Mammary epithelial cell (primary cell): ENCODE measurements at regions of chr14 and their contacts with region 1.

Region 1: DNA sequence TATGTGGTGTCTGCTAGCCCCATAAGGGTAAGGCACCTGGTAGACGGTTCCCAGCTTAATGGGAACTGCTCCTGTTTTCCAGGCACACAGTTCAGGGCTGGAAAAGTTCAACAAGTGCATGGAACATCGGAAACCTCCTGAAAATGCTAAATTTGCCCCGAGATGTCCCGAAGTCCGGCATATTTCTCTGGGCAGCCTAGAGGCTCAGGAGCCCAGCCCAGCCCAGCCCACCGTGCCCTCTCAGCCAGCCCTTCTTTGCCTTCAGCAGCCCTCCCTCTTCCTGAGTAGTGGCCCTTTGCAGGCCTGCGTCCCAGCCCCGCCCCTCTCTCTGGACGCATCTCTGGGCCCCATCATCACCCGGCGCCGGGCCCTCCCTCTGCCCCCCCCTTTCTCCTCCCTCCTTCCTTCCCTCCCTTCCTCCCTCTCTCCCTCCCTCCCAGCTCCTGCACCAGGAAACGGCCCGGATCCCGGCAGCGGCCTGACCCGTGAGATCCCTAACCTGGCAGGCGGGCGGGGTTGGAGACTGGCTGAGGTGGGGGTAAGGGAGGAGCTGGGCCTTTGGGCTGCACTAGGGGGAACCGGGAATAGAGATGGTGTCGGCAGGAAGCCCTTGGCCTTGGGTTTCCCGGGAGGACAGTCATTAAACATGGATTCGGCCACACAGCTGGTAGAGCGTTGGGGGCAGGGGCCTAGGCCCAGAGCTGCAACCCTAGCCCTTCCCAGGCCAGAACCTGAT is at the start of gene BCL2L2:
- DNase-seq: peak; percentile 89
- H3K4me3 ChIP-seq: peak within 1 kb of the TSS; percentile 67 to 88 (median 83)
- H3K27ac ChIP-seq: peak within 1 kb of the TSS; percentile 88
- H3K4me1 ChIP-seq: peaks cover 46% of the 10 kb centered on the region
- H3K27me3 ChIP-seq: no peaks in the 10 kb centered on the region
- CTCF ChIP-seq: no peak
- total RNA-seq, gene BCL2L2: 22.0 to 63.9 TPM

Region 2: GRCh38 chr14:23137192-23137829 is 169.3 kb before region 1 on chr14:
- CTCF ChIA-PET with region 1: no interaction called
- dilution Hi-C with region 1: no loop called
- in situ Hi-C with region 1: no loop called
- intact Hi-C with region 1: loop called (anchors 5 kb)
- DNase-seq: peak; percentile 80
- H3K4me3 ChIP-seq: no peak overlapping the region
- H3K27ac ChIP-seq: peak overlapping the region; percentile 66
- H3K4me1 ChIP-seq: peaks cover 30% of the 10 kb centered on the region
- H3K27me3 ChIP-seq: no peaks in the 10 kb centered on the region
- CTCF ChIP-seq: no peak

Region 3: DNA sequence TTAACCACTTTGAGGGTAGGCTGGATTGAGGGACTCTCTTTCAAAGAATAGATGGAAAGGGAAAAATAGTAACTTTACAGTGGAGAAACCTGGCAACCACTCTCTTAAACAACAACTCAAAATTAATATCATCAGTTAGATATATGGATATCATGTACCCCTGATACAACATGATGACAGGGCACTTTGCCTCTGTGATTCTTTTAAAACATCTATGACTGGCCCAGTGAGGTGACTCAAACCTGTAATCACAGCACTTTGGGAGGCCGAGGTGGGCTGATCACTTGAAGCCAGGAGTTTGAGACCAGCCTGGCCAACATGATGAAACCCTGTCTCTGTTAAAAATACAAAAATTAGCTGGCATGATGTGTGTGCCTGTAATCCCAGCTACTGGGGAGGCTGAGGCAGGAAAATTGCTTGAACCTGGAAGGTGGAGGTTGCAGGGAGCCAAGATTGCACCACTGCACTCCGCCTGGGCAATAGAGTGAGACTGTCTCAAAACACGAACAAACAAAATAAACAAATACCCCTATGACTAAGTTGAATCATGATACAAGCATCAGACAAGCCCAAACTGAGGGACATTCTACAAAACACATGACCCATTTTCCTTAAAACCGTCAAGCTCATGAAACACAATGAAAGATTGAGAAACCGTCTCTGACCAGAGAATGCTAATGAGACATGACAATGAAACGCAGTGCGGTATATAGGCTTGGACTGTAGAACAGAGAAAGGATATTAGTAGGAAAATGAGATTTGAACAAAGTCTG is 96.7 kb before region 1 on chr14:
- CTCF ChIA-PET with region 1: no interaction called
- dilution Hi-C with region 1: no loop called
- in situ Hi-C with region 1: no loop called
- intact Hi-C with region 1: no loop called
- DNase-seq: peak; percentile 84
- H3K4me3 ChIP-seq: no peak overlapping the region
- H3K27ac ChIP-seq: no peak overlapping the region
- H3K4me1 ChIP-seq: no peaks in the 10 kb centered on the region
- H3K27me3 ChIP-seq: no peaks in the 10 kb centered on the region
- CTCF ChIP-seq: no peak

Region 4: GRCh38 chr14:23237772-23238594 is 68.6 kb before region 1 on chr14 and contains the start of gene RNF212B:
- CTCF ChIA-PET with region 1: no interaction called
- dilution Hi-C with region 1: loop called (anchors 5 kb)
- in situ Hi-C with region 1: no loop called
- intact Hi-C with region 1: no loop called
- DNase-seq: peak; percentile 74
- H3K4me3 ChIP-seq: peak within 1 kb of the TSS; percentile 5 to 25 (median 19)
- H3K27ac ChIP-seq: no peak within 1 kb of the TSS
- H3K4me1 ChIP-seq: peaks cover 7% of the 10 kb centered on the region
- H3K27me3 ChIP-seq: no peaks in the 10 kb centered on the region
- CTCF ChIP-seq: no peak
- total RNA-seq, gene RNF212B: not detected

Region 5: GRCh38 chr14:23320774-23321571 is 14.4 kb after region 1 on chr14 and contains the start of gene PABPN1:
- CTCF ChIA-PET with region 1: no interaction called
- dilution Hi-C with region 1: no loop called
- in situ Hi-C with region 1: no loop called
- intact Hi-C with region 1: loop called (anchors 1 kb)
- DNase-seq: peak; percentile 100
- H3K4me3 ChIP-seq: peak within 1 kb of the TSS; percentile 86 to 95 (median 91)
- H3K27ac ChIP-seq: peak within 1 kb of the TSS; percentile 92
- H3K4me1 ChIP-seq: peaks cover 19% of the 10 kb centered on the region
- H3K27me3 ChIP-seq: no peaks in the 10 kb centered on the region
- CTCF ChIP-seq: no peak
- total RNA-seq, gene PABPN1: 43.0 to 148 TPM